ENCODE measurements at regions of chr3 and their contacts with region 1.

Region 1: DNA sequence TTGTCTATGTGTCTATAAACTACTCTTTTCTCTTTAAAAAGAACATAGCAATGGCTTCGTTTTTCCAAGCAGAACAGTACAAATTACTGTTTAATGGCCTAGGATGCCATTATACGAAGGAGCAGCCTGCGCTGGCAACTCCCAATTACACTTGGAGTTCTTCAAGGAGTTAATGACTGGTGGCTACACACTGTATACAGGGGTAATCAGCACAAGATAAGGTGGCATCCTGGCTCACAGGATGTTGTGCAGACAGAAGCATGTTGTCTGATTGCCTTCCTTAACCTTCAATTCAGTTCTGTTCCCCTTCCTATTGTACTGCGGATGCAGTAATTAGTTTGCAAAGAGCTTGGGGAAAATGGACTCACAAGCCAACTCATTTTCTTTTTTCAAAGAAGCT is 250.7 kb upstream of the ROBO2 start:
- DNase-seq: no peak
- H3K4me3 Mint-ChIP-seq: no peak overlapping the region
- H3K27ac Mint-ChIP-seq: no peak overlapping the region
- H3K4me1 Mint-ChIP-seq: no peaks in the 10 kb centered on the region
- H3K27me3 Mint-ChIP-seq: no peaks in the 10 kb centered on the region

Region 2: DNA sequence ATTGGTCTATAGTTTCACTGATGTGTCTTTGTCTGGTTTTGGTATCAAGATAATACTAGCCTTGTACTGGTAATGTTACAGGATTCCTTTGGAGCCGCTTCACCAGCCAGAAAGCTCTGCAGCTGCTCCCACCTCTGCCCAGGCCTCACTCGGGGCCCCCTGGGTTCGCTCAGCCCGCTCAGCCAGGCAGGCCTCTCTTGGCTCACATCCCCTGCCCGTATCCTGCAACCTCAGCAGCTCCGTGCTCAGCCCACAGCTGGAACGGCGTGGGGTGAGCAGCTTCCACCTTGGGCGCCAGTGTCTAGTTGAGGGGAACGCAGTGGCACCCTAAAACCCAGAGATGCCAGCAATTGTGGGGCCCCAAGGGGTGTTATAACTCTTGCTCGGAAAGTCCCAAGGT is 179.1 kb before region 1 on chr3:
- CTCF ChIA-PET with region 1: no interaction called
- intact Hi-C with region 1: loop called (anchors 10 kb)
- DNase-seq: no peak
- H3K4me3 Mint-ChIP-seq: no peak overlapping the region
- H3K27ac Mint-ChIP-seq: no peak overlapping the region
- H3K4me1 Mint-ChIP-seq: no peaks in the 10 kb centered on the region
- H3K27me3 Mint-ChIP-seq: no peaks in the 10 kb centered on the region

Measured in activated naive CD4-positive, alpha-beta T cell treated with anti-CD3 and anti-CD28 coated beads for 36 hours (primary cell).